Breast epithelium (tissue), 4 donors: ENCODE measurements at regions of chr11 and their contacts with region 1.

Region 1: GRCh38 chr11:129368889-129369672 is 6.6 kb upstream of the BARX2 start:
- DNase-seq: no peak
- H3K4me3 ChIP-seq: no peak overlapping the region
- H3K27ac ChIP-seq: peak overlapping the region; percentile 57 to 59
- H3K4me1 ChIP-seq: peaks cover 0 to 4% of the 10 kb centered on the region in 2 donors
- H3K27me3 ChIP-seq: peaks cover 0 to 30% of the 10 kb centered on the region in 2 donors
- CTCF ChIP-seq: no peak
- POLR2A ChIP-seq: no peak

Region 2: GRCh38 chr11:129750349-129751292 is 381.5 kb after region 1 on chr11:
- intact Hi-C with region 1: loop called (anchors 5 kb)
- DNase-seq: peak; percentile 59 to 76
- H3K4me3 ChIP-seq: peak overlapping the region in 2 of 3 donors; percentile 33 to 57
- H3K27ac ChIP-seq: peak overlapping the region; percentile 41 to 52
- H3K4me1 ChIP-seq: no peaks in the 10 kb centered on the region
- H3K27me3 ChIP-seq: no peaks in the 10 kb centered on the region
- CTCF ChIP-seq: peak; percentile 92 to 100 (median 95)
- POLR2A ChIP-seq: no peak